ENCODE measurements at regions of chr7 and their contacts with region 1.

Region 1: GRCh38 chr7:107725151-107725740 is 18.7 kb upstream of the CBLL1 start:
- DNase-seq: peak; percentile 42
- H3K4me3 ChIP-seq: no peak overlapping the region
- H3K27ac ChIP-seq: no peak overlapping the region
- H3K27me3 ChIP-seq: peaks cover 2% of the 10 kb centered on the region
- CTCF ChIP-seq: peak; percentile 65

Region 2: GRCh38 chr7:107743567-107744344 is 18.5 kb after region 1 on chr7 and contains the start of gene CBLL1:
- CTCF ChIA-PET with region 1: interaction called, 10 read pairs
- POLR2A ChIA-PET with region 1: no interaction called
- DNase-seq: peak; percentile 87
- H3K4me3 ChIP-seq: peak within 1 kb of the TSS; percentile 94
- H3K27ac ChIP-seq: peak within 1 kb of the TSS; percentile 99
- H3K27me3 ChIP-seq: no peaks in the 10 kb centered on the region
- CTCF ChIP-seq: peak; percentile 81
- polyA plus RNA-seq, gene CBLL1: 17.0 and 18.0 TPM in 2 replicates

Region 3: GRCh38 chr7:107958764-107959526 is 233.7 kb after region 1 on chr7:
- CTCF ChIA-PET with region 1: no interaction called
- POLR2A ChIA-PET with region 1: no interaction called
- DNase-seq: no peak
- H3K4me3 ChIP-seq: no peak overlapping the region
- H3K27ac ChIP-seq: peak overlapping the region; percentile 3
- H3K27me3 ChIP-seq: no peaks in the 10 kb centered on the region
- CTCF ChIP-seq: no peak

Measured in AG04450 (cell line).